PC-3 (cell line): ENCODE measurements at regions of chr19 and their contacts with region 1.

Region 1: DNA sequence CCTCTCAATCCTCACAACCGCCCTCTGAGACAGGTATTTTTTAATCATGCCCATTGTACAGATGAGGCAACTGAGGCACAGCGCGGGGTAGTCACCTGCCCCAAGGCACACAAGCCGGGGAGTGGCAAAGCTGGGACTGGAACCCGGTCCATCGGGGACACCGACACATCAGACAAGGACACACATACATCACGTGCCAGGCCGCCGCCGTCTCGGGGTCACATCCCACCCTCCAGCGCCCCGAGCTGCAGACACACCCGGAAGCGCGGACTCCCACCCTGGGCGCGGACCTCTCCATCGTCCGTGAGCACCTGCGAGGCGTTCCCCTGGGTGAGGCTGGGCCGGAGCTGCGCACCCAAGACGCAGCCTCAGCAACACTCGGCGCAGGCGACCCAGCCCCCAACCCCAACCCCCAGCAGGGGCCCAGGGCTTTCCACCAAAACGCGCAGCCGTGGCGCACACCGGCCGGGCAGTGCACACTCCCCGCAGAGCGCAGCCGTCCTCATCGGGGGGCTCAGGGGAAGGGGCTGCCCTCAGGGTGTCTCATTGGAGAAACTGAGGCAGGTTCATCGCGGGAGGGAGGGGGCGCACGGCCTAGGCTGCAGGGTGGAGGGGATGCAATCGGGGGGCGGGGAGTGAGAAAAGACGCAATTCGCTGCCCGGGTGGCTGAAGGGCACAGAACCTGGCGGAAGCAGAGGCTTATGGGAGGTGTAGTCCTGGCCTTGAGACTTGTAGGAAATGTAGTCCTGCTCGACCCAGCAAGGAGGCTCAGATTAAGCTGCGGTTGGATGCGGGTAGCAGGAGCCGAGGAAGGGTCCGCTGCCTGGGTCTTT is 1.9 kb upstream of the LMTK3 start:
- DNase-seq: peak; percentile 64
- ATAC-seq: peak; percentile 82
- H3K4me3 ChIP-seq: peak overlapping the region; percentile 81
- H3K27ac ChIP-seq: no peak overlapping the region
- H3K4me1 ChIP-seq: no peaks in the 10 kb centered on the region; the same call in 1 of the 2 replicates
- H3K27me3 ChIP-seq: no peaks in the 10 kb centered on the region
- CTCF ChIP-seq: no peak

Region 2: GRCh38 chr19:48452289-48453190 is 61.0 kb before region 1 on chr19:
- CTCF ChIA-PET with region 1: no interaction called
- POLR2A ChIA-PET with region 1: no interaction called
- intact Hi-C with region 1: no loop called
- DNase-seq: peak; percentile 24
- ATAC-seq: peak; percentile 15; the same call in 1 of the 2 replicates
- H3K4me3 ChIP-seq: no peak overlapping the region
- H3K27ac ChIP-seq: no peak overlapping the region
- H3K4me1 ChIP-seq: peaks cover 3% of the 10 kb centered on the region; the same call in 1 of the 2 replicates
- H3K27me3 ChIP-seq: no peaks in the 10 kb centered on the region
- CTCF ChIP-seq: no peak

Region 3: DNA sequence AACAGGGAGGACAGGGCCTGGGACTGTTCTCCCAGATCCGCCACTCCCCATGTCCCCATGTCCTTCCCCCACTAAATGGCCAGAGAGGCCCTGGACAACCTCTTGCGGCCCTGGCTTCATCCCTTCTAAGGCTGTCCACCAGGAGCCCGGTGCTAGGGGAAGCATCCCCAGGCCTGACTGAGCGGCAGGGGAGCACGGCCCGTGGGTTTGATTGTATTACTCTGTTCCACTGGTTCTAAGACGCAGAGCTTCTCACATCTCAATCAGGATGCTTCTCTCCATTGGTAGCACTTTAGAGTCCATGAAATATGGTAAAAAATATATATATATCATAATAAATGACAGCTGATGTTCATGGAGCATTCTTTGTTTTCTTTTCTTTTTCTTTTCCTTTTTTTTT is 93.8 kb after region 1 on chr19:
- CTCF ChIA-PET with region 1: interaction called, 12 read pairs
- POLR2A ChIA-PET with region 1: no interaction called
- intact Hi-C with region 1: no loop called
- DNase-seq: no peak
- ATAC-seq: no peak
- H3K4me3 ChIP-seq: no peak overlapping the region
- H3K27ac ChIP-seq: no peak overlapping the region
- H3K4me1 ChIP-seq: no peaks in the 10 kb centered on the region
- H3K27me3 ChIP-seq: no peaks in the 10 kb centered on the region
- CTCF ChIP-seq: no peak